A549 (cell line): ENCODE measurements at regions of chr17 and their contacts with region 1.

Region 1: DNA sequence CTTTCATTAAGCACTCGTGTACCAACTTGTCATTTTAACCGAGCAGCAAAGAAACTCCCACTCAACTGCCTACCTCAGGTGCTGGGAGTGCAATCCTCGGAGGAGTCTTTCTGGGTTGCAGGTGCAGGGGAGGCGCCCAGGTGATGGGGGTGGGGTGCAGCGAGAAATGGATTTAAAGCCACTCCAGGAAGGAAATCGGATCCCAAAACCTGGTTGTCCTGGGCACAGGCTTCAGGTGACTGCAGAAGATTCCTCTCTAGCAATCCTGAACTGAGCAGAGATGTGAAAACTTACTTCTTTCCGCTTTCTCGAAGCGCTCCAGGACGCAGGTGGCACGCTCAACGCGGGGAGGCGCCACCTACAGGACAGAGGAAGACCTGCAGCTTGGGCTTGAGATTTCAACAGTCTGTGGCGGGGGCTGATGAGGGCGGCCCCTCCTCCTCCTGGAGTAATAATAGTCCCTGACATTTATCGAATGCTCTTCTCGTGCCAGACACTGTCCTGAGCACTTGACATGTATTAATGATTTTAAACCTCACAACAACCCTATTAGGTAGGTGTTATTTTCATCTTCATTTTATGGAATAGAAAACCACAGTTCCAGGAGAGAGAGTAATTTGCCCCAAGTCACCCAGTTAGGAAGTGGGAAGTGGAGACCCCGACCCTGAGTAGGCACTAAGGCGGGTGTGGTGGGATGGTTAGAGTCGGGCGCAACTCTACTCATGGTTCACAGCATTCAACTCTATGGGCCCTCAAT is 27.2 kb upstream of the SKAP1 start:
- DNase-seq: peak; percentile 69 to 75
- ATAC-seq: peak; percentile 84 to 97
- H3K4me3 ChIP-seq: peak overlapping the region; percentile 30; the same call in 2 of the 3 replicates
- H3K27ac ChIP-seq: no peak overlapping the region
- H3K4me1 ChIP-seq: peaks cover 8% of the 10 kb centered on the region; the same call in 2 of the 3 replicates
- CTCF ChIP-seq: peak; percentile 97
- EP300 ChIP-seq: no peak
- POLR2A ChIP-seq: no peak
- RAD21 ChIP-seq: peak; percentile 69 to 75

Region 2: GRCh38 chr17:48432820-48433775 is 24.2 kb before region 1 on chr17:
- CTCF ChIA-PET with region 1: interaction called, 117 read pairs
- POLR2A ChIA-PET with region 1: no interaction called
- DNase-seq: no peak
- ATAC-seq: no peak
- H3K4me3 ChIP-seq: no peak overlapping the region
- H3K27ac ChIP-seq: no peak overlapping the region
- H3K4me1 ChIP-seq: no peaks in the 10 kb centered on the region
- CTCF ChIP-seq: no peak
- EP300 ChIP-seq: no peak
- POLR2A ChIP-seq: no peak
- RAD21 ChIP-seq: no peak

Region 3: GRCh38 chr17:48441231-48441711 is 16.0 kb before region 1 on chr17:
- CTCF ChIA-PET with region 1: interaction called, 117 read pairs
- POLR2A ChIA-PET with region 1: no interaction called
- DNase-seq: no peak
- ATAC-seq: no peak
- H3K4me3 ChIP-seq: no peak overlapping the region
- H3K27ac ChIP-seq: no peak overlapping the region
- H3K4me1 ChIP-seq: no peaks in the 10 kb centered on the region
- CTCF ChIP-seq: no peak
- EP300 ChIP-seq: no peak
- POLR2A ChIP-seq: no peak
- RAD21 ChIP-seq: no peak

Region 4: DNA sequence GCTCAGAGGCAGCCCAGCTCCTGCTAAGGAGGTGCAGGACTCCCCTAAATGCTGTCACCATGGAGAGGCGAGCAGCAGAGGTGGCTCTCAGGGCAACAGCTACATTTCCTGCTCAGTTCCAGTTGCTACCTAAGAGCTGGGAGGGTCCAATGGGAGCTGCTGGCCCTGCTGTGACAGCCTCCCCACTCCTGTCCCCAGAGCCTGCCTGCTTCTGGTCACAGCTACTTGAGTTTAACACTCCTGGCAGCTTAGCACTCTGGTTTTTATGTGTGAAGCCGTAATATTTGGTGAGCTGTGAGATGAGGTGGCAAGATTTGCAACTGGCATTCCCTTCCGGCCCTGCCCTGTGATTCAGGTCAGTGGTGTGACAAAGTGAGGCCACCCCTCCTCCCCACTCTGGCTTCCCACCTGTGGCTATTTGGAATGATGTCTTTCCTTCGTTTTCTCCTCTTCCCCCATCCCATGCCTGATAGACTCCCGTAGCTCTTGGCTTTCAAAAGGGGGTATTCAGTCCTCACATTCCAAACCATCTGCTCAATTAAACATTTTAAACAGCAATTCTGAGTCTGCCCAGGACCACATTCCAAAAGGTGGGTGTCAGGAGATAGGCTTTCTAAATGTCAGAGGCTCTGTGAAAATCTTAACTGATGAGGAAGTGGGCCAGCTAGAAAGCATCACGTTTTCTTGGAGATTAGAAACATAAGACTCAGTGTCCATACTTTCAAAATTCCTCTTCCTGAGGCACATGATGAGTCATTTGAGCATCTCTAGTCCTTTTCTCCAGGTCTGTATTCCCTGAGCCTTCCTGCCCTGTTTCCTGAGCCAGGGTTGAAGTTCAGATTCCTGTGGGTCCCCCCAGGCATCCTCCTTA is 15.4 kb after region 1 on chr17:
- CTCF ChIA-PET with region 1: interaction called, 85 read pairs
- POLR2A ChIA-PET with region 1: no interaction called
- DNase-seq: peak in 1 of 2 experiments; percentile 32
- ATAC-seq: peak; percentile 38 to 48; a peak in 4 of 6 replicates
- H3K4me3 ChIP-seq: no peak overlapping the region
- H3K27ac ChIP-seq: 0 out of 6 replicates have a peak overlapping the region, but pooled peaks of 1 of the 2 experiments have one; percentile 12
- H3K4me1 ChIP-seq: peaks cover 6% of the 10 kb centered on the region; the same call in 2 of the 3 replicates
- CTCF ChIP-seq: no peak
- EP300 ChIP-seq: no peak
- POLR2A ChIP-seq: no peak
- RAD21 ChIP-seq: no peak

Region 5: DNA sequence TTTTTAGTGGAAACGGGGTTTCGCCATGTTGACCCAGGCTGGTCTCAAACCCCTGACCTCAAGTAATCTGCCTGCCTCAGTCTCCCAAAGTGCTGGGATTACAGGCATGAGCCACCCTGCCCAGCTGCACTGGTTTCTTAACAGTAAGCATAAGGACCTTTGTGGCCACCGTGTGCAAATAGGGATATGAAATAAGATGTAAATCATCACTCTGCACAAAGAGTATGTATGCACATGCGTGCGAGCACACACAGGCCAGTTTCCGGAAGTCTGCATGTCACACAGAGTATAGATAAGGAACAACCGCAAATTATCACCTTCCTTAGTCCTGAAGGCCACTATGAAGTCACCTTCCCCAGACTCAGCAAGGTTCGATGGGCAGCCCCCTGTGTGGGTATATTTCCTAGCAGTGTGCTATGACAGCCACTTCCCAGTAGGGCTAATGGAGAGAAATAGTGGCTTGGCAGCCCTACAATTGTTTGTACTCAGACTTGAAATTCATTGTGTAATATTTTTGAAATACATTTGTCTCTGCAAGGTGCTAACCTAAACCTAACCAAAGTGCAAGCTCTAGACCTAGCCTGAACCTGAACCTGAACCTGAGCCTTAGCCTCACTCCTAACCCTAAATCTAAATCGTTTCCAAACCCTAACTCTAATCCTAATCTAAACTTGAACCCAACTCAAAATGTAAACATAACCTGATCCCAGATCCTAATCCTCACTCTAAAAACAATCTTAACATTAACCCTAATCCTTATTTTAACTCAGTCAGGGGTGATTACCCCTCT is 21.2 kb after region 1 on chr17:
- CTCF ChIA-PET with region 1: interaction called, 85 read pairs
- POLR2A ChIA-PET with region 1: no interaction called
- DNase-seq: no peak
- ATAC-seq: peak; percentile 54 to 66; a peak in 4 of 6 replicates
- H3K4me3 ChIP-seq: no peak overlapping the region
- H3K27ac ChIP-seq: no peak overlapping the region
- H3K4me1 ChIP-seq: peaks cover 4% of the 10 kb centered on the region
- CTCF ChIP-seq: no peak
- EP300 ChIP-seq: no peak
- POLR2A ChIP-seq: no peak
- RAD21 ChIP-seq: no peak

Region 6: GRCh38 chr17:48505787-48506645 is 48.8 kb after region 1 on chr17:
- CTCF ChIA-PET with region 1: interaction called, 10 read pairs
- POLR2A ChIA-PET with region 1: no interaction called
- DNase-seq: peak; percentile 78 to 89
- ATAC-seq: peak; percentile 86 to 94
- H3K4me3 ChIP-seq: no peak overlapping the region
- H3K27ac ChIP-seq: peak overlapping the region; percentile 16 to 47
- H3K4me1 ChIP-seq: peaks cover 24% of the 10 kb centered on the region
- CTCF ChIP-seq: no peak; the same call in 2 of the 3 replicates
- EP300 ChIP-seq: no peak
- POLR2A ChIP-seq: no peak
- RAD21 ChIP-seq: no peak; a peak in 1 of 5 replicates